ENCODE measurements at regions of chr12 and their contacts with region 1.

Region 1: DNA sequence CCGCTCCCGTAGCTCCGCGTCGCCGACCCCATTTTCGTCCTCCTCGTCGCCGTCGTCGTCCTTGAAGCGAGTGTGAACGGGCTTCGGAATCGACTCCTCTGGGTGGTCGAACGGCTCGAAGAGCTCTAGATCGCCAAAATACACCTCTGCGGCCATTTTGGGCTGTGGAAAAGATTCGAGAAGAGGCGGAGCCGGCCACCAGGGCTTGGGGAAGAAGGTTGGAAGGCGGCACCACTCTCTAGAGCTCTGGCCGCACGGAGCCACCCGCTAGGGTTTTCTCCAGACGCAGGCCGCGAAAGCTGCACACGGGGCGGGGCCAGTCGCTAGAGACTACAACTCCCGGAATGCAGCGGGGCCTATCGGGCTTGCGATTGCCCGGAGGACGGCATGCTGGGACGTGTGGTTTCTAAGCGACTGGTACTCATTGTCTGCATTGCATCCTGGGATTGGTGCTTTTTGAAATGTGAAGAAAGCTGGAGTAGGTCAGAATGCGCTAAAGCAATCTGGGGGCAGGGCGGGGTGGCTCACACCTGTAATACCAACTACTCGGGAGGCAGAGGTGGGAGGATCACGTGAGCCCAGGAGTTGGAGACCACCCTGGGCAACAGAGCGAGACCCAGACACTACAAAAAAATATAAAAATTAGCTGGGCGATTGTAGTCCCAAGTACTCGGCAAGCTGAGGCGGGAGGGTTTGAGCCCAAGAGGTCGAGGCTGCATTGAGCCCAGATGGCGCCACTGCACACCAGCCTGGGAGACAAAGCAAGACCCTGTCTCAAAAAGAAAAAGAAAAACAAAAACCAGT is at the start of gene ZCCHC8:
- DNase-seq: peak; percentile 99
- H3K4me3 Mint-ChIP-seq: peak within 1 kb of the TSS; percentile 93
- H3K27ac Mint-ChIP-seq: peak within 1 kb of the TSS; percentile 96
- H3K4me1 Mint-ChIP-seq: peaks cover 11% of the 10 kb centered on the region
- H3K27me3 Mint-ChIP-seq: no peaks in the 10 kb centered on the region
- CTCF ChIP-seq: no peak
- total RNA-seq, gene ZCCHC8: 33.4 and 41.8 TPM in 2 replicates

Region 2: GRCh38 chr12:122421821-122422729 is 78.8 kb before region 1 on chr12 and contains the start of gene CLIP1:
- CTCF ChIA-PET with region 1: no interaction called
- POLR2A ChIA-PET with region 1: interaction called, 19 read pairs
- intact Hi-C with region 1: loop called (anchors 2 kb)
- DNase-seq: peak; percentile 68
- H3K4me3 Mint-ChIP-seq: peak within 1 kb of the TSS; percentile 87
- H3K27ac Mint-ChIP-seq: peak within 1 kb of the TSS; percentile 95
- H3K4me1 Mint-ChIP-seq: peaks cover 4% of the 10 kb centered on the region
- H3K27me3 Mint-ChIP-seq: no peaks in the 10 kb centered on the region
- CTCF ChIP-seq: peak; percentile 66
- total RNA-seq, gene CLIP1: 92.6 and 115 TPM in 2 replicates

Region 3: DNA sequence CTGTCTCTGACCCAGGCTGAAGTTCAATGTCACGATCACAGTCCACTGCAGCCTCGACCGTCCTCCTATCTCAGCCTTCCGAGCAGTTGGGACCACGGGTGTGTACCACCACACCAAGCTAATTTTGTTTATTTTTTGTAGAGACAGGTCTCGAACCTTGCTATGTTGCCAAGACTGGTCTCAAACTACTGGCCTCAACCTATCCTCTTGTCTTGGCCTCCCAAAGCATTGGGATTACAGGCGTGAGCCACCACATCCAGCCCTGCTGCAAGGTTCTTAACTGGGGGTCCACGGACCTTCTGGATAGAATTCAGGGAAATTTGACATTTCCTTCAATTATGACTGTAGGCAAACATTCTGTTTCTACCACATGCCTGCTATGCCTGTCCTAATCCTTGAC is 37.1 kb before region 1 on chr12:
- CTCF ChIA-PET with region 1: no interaction called
- POLR2A ChIA-PET with region 1: interaction called, 21 read pairs
- intact Hi-C with region 1: no loop called
- DNase-seq: no peak
- H3K4me3 Mint-ChIP-seq: no peak overlapping the region
- H3K27ac Mint-ChIP-seq: peak overlapping the region; percentile 91
- H3K4me1 Mint-ChIP-seq: no peaks in the 10 kb centered on the region
- H3K27me3 Mint-ChIP-seq: no peaks in the 10 kb centered on the region
- CTCF ChIP-seq: no peak

Region 4: GRCh38 chr12:122483969-122484368 is 16.9 kb before region 1 on chr12:
- CTCF ChIA-PET with region 1: interaction called, 3 read pairs
- POLR2A ChIA-PET with region 1: interaction called, 17 read pairs
- intact Hi-C with region 1: no loop called
- DNase-seq: no peak
- H3K4me3 Mint-ChIP-seq: no peak overlapping the region
- H3K27ac Mint-ChIP-seq: no peak overlapping the region
- H3K4me1 Mint-ChIP-seq: no peaks in the 10 kb centered on the region
- H3K27me3 Mint-ChIP-seq: no peaks in the 10 kb centered on the region
- CTCF ChIP-seq: no peak

Region 5: DNA sequence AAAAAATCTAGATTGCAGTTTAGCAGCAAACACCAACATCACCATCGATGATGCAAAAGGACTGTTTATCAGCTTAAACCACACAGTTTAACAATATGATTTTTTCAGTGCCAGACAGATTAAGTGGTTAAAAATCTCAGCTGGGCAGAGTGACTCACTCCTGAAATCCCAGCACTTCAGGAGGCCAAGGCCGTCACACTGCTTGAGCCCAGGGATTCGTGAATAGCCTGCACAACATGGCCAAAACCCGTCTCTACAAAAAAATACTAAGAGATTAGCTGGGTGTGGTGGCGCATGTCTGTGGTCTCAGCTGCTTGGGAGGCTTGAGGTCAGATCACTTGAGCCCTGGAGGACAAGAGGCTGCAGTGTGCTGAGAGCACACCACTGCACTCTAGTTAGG is 17.0 kb after region 1 on chr12:
- CTCF ChIA-PET with region 1: no interaction called
- POLR2A ChIA-PET with region 1: interaction called, 271 read pairs
- intact Hi-C with region 1: loop called (anchors 2 kb)
- DNase-seq: peak; percentile 73
- H3K4me3 Mint-ChIP-seq: no peak overlapping the region
- H3K27ac Mint-ChIP-seq: no peak overlapping the region
- H3K4me1 Mint-ChIP-seq: peaks cover 24% of the 10 kb centered on the region
- H3K27me3 Mint-ChIP-seq: no peaks in the 10 kb centered on the region
- CTCF ChIP-seq: no peak

Region 6: DNA sequence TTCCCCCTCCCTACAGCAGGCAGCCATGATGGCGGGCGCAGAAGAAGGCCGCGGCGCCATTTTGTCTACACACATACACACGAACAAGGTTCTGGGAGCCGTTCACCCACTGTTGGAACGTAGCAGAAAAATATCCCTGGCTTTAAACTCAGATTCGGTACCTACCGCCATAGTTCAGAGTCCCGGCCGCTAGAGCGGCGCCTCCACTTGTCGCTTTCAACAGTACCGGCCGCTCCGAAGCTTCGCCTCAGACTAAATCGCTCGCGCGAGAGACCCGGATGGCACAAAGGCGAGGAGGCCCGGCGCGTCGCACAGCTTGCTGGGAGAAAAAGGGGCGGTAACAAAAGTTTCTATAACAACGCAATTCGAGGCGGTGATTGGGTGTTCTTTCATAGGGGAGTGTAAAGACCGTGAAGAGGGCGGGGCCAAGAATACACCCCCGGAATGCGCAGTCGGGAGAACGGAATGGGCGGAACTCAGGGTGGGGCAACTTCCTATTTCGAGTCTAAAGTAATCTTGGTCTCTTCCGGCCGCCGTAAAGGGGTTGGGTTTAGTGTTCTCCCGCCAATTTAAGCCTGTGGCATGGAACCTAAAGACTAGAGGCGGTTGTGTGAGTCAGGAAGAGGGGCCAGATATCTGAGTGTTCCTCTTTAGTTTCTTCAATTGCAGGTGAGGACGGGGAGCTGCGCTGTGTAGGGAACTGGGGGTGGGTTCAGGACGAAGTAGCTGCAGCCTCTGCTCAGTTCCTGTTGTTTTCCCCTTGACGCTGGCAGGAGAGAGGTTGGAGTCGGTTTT is 26.0 kb after region 1 on chr12 and contains the starts of genes KNTC1 and RSRC2:
- CTCF ChIA-PET with region 1: interaction called, 4 read pairs
- POLR2A ChIA-PET with region 1: interaction called, 271 read pairs
- intact Hi-C with region 1: no loop called
- DNase-seq: peak; percentile 100
- H3K4me3 Mint-ChIP-seq: no peak within 1 kb of the TSS
- H3K27ac Mint-ChIP-seq: no peak within 1 kb of the TSS
- H3K4me1 Mint-ChIP-seq: peaks cover 7% of the 10 kb centered on the region
- H3K27me3 Mint-ChIP-seq: no peaks in the 10 kb centered on the region
- CTCF ChIP-seq: no peak
- total RNA-seq, gene KNTC1: 18.0 and 26.1 TPM in 2 replicates
- total RNA-seq, gene RSRC2: 74.9 and 93.4 TPM in 2 replicates

Measured in MCF 10A (cell line).